ENCODE measurements at regions of chr11 and their contacts with region 1.

Region 1: DNA sequence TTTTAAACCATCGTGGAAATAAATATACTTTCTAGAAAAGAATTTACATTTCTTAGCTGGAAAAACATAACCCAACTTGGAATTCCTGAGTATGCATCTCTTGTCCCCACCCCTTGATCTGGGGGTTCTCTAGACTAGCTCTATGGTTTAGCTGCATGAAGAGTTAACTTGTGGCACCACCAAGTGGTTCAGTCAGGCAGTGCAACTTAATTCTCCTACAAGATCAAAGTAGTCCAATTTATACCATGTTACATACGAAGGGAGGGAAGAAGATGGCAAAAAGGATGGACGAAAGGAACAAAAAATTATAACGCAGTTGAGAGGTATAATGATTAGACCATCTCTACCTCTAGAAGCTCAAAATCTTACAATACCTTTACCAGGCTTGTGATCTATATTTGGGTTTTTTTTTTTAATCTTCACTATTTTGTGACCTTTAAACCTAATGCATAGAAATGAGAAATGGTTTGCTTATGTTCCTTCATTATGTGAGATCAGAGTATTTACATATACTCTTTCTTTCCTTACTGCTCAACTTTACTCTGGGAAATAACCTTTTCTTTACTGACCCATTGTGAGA is 28.5 kb upstream of the ALKBH3 start:
- DNase-seq: peak; percentile 72
- ATAC-seq: peak; percentile 69
- H3K4me3 Mint-ChIP-seq: no peak overlapping the region
- H3K27ac Mint-ChIP-seq: no peak overlapping the region
- H3K4me1 Mint-ChIP-seq: no peaks in the 10 kb centered on the region
- H3K27me3 Mint-ChIP-seq: no peaks in the 10 kb centered on the region

Region 2: GRCh38 chr11:43825217-43825816 is 26.8 kb before region 1 on chr11:
- CTCF ChIA-PET with region 1: interaction called, 20 read pairs
- DNase-seq: no peak
- ATAC-seq: no peak
- H3K4me3 Mint-ChIP-seq: no peak overlapping the region
- H3K27ac Mint-ChIP-seq: no peak overlapping the region
- H3K4me1 Mint-ChIP-seq: peaks cover 2% of the 10 kb centered on the region
- H3K27me3 Mint-ChIP-seq: no peaks in the 10 kb centered on the region

Region 3: GRCh38 chr11:43962383-43963278 is 110.5 kb after region 1 on chr11:
- CTCF ChIA-PET with region 1: no interaction called
- DNase-seq: no peak
- ATAC-seq: no peak
- H3K4me3 Mint-ChIP-seq: no peak overlapping the region
- H3K27ac Mint-ChIP-seq: no peak overlapping the region
- H3K4me1 Mint-ChIP-seq: no peaks in the 10 kb centered on the region
- H3K27me3 Mint-ChIP-seq: peaks cover 43% of the 10 kb centered on the region

Region 4: GRCh38 chr11:44036811-44037657 is 184.9 kb after region 1 on chr11:
- CTCF ChIA-PET with region 1: no interaction called
- DNase-seq: peak; percentile 52
- ATAC-seq: peak; percentile 45
- H3K4me3 Mint-ChIP-seq: no peak overlapping the region
- H3K27ac Mint-ChIP-seq: no peak overlapping the region
- H3K4me1 Mint-ChIP-seq: no peaks in the 10 kb centered on the region
- H3K27me3 Mint-ChIP-seq: peaks cover 8% of the 10 kb centered on the region

Region 5: DNA sequence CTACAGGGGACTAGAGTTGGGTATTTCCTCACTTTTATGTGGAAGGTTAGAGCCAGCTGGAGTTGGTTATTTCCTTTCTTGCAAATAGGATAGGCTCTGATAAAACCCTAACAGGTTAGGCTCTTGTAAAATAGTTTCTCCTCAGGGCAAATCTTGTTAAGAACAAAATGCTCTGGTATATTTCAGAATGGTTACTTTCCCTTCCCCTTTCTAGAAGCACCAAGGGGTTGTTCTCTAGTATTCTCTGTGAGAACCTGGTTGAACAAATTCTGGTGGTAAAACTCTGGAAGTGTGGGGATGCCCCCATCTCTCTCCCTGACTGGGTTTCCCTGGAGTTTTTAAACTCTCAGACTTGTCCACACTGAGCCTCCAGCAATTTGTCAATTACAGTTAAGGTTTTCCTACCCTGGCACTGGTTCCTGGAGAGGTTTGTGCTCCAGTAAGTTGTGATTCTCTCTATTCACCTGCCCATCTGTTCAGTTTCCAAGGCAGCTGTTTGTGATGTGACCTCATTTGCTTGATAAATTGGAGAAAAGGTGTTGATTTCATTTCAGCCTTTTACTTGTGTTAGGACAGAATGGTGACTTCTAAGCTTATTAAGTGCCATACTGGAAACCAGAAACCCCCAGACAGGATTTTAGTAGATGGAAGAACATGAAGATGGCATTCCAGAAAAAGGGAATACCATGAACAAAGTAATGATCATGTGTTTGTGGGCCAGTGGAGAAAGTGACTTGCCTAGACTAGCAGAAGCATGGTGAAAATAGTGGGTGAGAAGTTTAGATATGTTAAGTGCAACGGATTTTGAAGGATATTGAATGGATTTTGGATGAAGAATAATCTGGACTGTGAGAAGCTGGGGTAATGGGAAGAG is 307.9 kb after region 1 on chr11:
- CTCF ChIA-PET with region 1: no interaction called
- DNase-seq: no peak
- ATAC-seq: no peak
- H3K4me3 Mint-ChIP-seq: no peak overlapping the region
- H3K27ac Mint-ChIP-seq: no peak overlapping the region
- H3K4me1 Mint-ChIP-seq: peaks cover 7% of the 10 kb centered on the region
- H3K27me3 Mint-ChIP-seq: no peaks in the 10 kb centered on the region